Ascending aorta (tissue), 2 donors: ENCODE measurements at regions of chr3 and their contacts with region 1.

Region 1: DNA sequence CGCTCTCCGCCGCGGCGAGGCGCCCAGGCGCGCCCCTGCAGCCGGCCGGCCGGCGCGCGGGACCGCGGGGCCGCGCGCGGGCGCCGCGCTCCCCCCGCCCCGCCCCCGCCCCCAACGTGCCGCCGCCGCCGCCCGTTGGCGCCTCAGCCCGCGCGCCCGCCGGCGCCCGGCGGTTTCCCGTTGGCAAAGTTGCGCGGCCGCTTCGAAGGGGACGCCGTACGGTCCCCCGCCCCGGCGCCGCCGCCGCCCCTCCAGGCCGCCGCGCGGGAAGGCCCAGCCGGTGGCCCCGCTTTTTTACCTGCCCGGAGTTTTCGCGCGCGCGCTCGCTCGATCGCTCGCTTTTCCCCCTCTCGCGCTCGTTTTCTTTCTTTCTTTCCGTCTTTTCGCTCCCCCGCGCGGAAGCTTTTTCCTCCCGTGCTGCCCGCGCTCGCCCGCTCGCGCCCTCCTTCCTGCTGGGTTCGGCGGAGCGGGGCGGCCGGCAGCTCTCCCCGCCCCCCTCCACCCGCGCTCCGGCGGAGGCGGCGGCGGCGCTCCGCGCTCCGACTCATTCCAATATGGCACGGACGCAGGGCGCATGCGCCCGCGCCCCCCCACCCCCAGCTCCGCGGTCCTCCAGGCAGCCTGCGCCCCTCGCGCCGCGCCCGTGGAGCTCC is at the start of gene SFMBT1:
- DNase-seq: peak in 1 of 2 donors; percentile 76
- H3K4me3 ChIP-seq: peak within 1 kb of the TSS; percentile 99 to 100
- H3K27ac ChIP-seq: peak within 1 kb of the TSS; percentile 78 to 90
- H3K4me1 ChIP-seq: peaks cover 0 to 4% of the 10 kb centered on the region in 2 donors
- H3K27me3 ChIP-seq: no peaks in the 10 kb centered on the region
- CTCF ChIP-seq: no peak
- total RNA-seq, gene SFMBT1: 1.4 TPM

Region 2: GRCh38 chr3:52845691-52846431 is 199.8 kb before region 1 on chr3:
- intact Hi-C with region 1: loop called (anchors 5 kb)
- DNase-seq: no peak
- H3K4me3 ChIP-seq: no peak overlapping the region
- H3K27ac ChIP-seq: peak overlapping the region; percentile 89 to 92
- H3K4me1 ChIP-seq: peaks cover 11 to 29% of the 10 kb centered on the region in 2 donors
- H3K27me3 ChIP-seq: no peaks in the 10 kb centered on the region
- CTCF ChIP-seq: peak in 2 of 3 experiments; percentile 43 to 47

Region 3: DNA sequence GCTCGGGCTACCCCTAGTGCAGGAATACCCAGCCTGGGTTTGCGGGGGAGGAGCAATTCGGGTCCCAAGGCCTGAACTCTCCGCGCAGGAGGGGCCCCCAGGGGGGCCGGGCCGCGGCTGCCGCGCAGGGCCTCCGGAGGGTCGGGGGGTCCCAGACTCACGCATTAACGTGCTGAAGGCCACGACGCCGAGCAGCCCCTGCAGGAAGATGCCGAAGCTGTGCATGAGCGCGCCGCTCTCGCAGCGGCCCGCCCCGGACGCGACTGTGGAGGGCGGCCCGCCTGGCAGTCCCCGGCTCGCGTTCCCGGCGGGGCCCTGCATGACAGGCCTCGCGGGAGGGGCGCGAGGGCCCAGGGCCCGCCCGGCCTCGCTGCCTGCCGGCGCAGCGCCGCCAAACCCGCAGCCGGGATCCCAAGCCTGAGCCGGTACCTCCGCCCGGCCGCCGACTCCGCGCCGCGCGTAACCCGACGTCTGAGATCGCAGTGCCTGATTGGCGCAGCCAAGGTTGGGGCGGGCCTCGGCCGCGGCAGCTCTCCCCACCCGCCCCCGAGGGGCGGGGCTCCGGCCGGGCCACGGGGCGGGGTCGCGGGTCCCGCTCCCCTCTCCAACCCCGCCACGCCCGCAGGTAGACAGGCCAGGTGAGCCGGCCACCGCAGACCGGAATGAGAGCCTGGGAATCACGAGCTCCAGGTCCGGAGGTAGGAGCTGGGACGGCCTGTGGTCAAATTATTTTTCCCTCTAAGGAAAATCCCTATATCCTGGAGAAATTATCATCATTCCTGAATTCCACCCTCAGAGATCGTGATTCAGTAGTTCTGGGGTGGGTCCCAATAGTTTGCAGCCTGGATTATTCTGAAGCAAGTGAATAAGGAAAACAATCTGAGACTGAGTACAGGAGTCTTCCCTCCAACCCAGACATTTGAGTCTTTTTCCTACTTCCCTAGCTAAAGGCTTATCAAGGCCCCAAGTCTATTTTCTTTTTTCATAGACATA is 148.2 kb before region 1 on chr3 and contains the start of gene STIMATE:
- intact Hi-C with region 1: loop called (anchors 5 kb)
- DNase-seq: peak; percentile 53 to 93
- H3K4me3 ChIP-seq: peak within 1 kb of the TSS; percentile 68 to 91
- H3K27ac ChIP-seq: peak within 1 kb of the TSS; percentile 80 to 87
- H3K4me1 ChIP-seq: peaks cover 7 to 32% of the 10 kb centered on the region in 2 donors
- H3K27me3 ChIP-seq: no peaks in the 10 kb centered on the region
- CTCF ChIP-seq: no peak
- total RNA-seq, gene STIMATE: 18.9 TPM

Region 4: DNA sequence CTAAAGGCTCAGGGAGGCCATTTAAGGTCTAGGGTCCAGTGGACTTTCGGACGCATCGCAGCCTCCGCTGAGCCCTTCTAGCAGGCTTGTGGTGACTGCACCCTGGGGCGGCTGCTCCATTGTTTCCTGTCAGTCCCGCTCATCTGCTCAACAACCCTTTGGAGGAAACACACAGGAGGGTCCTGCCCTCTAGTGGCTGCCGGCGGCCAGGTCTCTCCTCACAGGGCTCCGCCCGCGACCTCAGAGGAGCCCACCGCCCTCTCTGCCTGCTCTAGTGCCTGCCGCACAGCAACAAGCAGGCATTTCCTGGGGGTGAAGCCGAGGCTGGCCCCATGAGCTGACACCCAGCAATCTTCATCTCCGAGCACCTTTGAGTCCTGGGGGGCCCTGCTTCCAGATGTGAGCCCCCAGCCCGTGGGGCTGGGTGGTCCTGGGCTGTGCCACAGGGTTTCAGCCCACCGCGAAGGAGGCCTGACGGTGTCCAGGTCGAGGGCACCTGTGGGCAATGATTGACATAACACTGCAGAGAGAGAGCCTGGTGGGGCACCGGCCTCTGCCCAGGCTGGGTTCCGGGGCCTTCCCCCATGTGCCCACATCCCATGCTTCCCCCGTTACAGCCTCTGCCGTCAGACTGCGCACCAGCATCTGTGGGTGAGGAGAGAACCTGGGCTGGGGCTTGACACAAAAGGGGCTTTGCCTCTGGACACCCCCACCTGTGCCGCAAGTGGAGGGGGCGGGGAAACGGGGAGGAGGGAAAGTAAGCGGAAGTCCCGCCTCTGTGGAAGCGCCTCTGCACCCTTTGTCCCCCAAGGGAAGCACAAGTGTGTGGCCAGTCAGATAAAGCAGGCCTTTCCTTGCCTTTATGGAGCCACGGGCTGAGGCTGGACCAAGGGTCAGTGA is 27.3 kb after region 1 on chr3:
- intact Hi-C with region 1: loop called (anchors 2 kb)
- DNase-seq: peak; percentile 35 to 93
- H3K4me3 ChIP-seq: peak overlapping the region; percentile 46 to 71
- H3K27ac ChIP-seq: peak overlapping the region; percentile 19 to 58
- H3K4me1 ChIP-seq: peaks cover 0 to 8% of the 10 kb centered on the region in 2 donors
- H3K27me3 ChIP-seq: no peaks in the 10 kb centered on the region
- CTCF ChIP-seq: peak; percentile 90 to 94 (median 93)

Region 5: DNA sequence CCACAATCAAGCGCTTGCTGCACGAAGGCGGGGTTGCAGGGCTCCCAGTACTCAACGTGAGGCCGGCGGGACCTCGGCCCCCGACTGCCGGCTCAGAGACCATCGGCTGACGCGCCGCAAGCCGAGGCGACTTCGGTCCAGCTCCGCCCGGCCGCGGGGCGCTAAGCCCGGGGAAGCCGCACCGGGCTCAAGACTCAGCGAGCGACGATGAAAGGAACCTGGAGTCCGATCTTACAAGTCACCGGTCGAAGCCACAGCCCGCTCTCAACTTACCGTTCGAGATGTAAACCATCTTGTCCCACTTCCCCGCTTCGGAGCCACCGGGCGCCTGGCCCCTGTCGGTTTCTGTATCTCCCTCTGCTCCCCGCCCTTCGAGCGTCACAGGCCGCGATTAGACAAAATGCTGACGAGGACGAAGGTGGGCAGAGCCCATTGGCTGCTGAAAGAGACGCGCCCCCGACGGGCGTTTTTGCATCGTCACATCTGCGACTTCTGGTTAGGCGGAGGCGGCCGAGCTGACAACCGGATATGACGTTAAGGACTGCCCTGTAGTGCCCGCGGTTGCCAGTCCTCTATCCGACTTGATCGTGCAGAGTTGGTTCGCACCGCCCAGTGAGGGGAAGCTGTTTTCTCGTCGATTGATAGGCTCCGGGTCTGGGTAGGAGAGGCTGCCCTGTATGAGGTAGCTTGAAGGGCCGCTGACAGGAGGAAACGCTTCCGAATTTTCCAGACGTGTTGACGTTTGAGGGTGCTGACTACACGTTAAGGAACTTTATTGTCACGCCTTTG is 846.0 kb after region 1 on chr3 and contains the start of gene SELENOK:
- intact Hi-C with region 1: loop called (anchors 5 kb)
- DNase-seq: peak; percentile 98 to 100
- H3K4me3 ChIP-seq: peak within 1 kb of the TSS; percentile 82 to 87
- H3K27ac ChIP-seq: peak within 1 kb of the TSS; percentile 79 to 98
- H3K4me1 ChIP-seq: peaks cover 3 to 16% of the 10 kb centered on the region in 2 donors
- H3K27me3 ChIP-seq: no peaks in the 10 kb centered on the region
- CTCF ChIP-seq: no peak
- total RNA-seq, gene SELENOK: 18.7 TPM